ENCODE measurements at regions of chr22 and their contacts with region 1.

Region 1: DNA sequence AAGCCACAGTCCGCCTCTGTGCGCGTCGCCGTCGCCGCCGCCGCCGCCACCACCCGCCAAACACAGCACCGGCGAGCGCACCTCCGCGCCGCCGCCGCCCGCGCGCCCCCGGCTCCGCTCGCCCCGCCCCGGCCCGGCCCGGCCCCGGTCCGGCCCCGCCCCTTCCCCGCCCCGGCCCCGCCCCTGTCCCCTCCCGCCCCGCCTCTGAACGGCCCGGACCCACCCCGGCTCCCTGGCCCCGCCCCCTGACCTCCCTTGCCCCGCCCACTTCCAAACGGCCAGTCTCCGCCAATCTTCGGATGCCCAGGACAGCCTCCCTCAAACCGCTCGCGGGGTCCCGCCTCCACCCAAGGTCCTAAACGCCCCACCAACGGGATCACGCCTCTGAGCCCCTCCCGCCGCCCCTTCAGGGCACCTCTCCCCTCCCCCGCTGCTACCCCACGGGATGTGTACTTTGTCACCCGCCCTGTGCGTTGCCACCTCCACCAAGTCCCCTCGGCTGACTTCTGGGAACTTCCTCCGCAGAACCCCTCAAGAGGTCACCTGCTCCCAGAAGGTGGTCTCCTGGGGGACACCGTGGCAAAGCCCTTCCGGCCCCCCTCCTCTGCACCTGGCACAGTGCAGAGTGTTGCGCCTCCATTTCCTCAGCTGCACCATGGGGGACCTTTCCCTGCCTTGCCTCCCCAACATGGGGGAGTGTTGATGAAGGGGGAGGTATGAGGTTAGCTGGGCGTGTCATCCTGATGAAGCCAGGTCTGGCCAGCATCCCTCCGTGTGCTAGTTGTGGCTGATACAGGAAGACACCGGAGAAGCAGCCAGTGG is at the start of gene KIAA0930:
- DNase-seq: peak; percentile 92
- total RNA-seq, gene KIAA0930: 21.6 TPM

Region 2: GRCh38 chr22:45163451-45164269 is 77.4 kb before region 1 on chr22 and contains the start of gene NUP50:
- intact Hi-C with region 1: loop called (anchors 10 kb)
- DNase-seq: peak; percentile 98
- total RNA-seq, gene NUP50: 13.4 TPM

Region 3: DNA sequence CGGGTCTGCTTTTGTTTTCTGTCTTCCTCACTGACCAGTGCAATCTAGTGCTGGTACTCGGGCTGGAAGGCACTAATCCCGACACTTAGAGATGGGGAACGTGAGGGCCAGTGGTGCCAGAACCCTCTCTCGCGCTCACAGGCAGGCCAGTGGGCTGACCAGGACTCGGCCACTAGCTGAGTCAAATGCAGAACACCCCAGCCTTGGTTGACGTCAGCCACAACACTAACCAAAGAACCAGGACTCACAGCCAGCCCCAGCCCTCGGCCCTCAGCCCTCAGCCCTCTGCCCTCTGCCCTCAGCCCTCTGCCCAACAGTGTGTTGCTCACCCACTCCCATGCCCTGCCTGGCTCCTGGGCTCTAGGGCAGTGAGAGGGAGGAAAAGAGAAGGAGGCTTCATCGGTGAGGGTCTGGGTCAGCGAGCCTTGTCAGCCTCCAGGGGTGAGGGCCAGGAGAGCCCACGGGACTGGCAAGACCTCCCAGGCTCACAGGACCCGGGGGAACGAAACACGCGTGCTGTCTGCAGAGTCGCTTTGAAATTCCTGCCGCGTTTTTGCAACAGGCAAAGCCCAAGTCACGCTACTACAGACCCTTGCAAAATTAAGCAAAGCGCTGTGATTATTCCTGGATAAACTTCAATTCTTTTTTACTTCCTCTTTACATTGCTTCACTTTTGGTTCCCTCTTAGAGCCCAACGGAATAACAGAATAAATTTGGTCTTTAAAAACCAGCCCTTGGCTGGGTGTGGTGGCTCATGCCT is 27.8 kb before region 1 on chr22:
- intact Hi-C with region 1: no loop called
- DNase-seq: no peak

Measured in cardiac septum (tissue), 1 donor.